Heart left ventricle (tissue), 16 donors: ENCODE measurements at regions of chr3 and their contacts with region 1.

Region 1: DNA sequence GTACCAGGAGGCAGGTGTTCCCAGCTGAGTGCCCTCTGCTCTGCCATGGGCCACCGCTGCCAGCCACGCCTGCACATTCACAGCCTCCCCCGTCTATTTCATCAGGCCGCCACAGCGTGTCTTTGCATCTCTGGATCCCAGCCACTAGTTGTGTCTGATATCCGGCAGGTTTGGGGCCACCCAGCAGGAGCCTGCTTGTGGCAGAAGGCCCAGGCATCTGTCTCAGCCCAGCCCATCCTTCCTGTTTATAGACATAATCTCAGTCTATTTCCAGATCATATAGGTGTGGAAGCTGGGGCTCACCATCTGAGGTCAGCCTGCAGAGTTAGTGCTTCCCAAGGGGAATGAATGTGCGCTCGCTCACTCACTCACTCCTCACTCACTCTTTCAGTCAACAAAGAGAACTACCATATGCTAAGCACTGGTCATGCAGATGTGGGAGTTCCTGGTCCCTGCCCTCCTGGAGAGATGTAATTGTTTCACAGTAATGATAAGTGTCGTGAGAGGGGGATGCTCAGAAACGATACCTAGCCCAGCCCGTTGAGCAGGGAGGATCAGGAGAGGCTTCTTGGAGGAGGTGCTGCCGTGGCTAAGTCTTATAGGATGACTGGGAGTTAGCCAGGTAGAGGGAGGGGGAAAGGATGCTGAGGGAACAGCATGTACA is 60.6 kb downstream of the FGD5 start:
- DNase-seq: peak in 3 of 5 donors; percentile 44 to 65 (median 45)
- ATAC-seq: peak; percentile 49 to 66 (median 60)
- H3K4me3 ChIP-seq: no peak overlapping the region
- H3K27ac ChIP-seq: peak overlapping the region in 7 of 12 donors; percentile 1 to 39 (median 9)
- H3K4me1 ChIP-seq: peaks cover 0 to 54% (median 35%) of the 10 kb centered on the region in 12 donors
- H3K27me3 ChIP-seq: no peaks in the 10 kb centered on the region
- CTCF ChIP-seq: no peak
- POLR2A ChIP-seq: no peak

Region 2: GRCh38 chr3:14803101-14803980 is 76.0 kb before region 1 on chr3:
- intact Hi-C with region 1: loop called in 1 of 10 experiments (anchors 5 kb)
- DNase-seq: peak in 1 of 5 donors; percentile 59
- ATAC-seq: peak; percentile 57 to 64 (median 58)
- H3K4me3 ChIP-seq: no peak overlapping the region
- H3K27ac ChIP-seq: peak overlapping the region; percentile 14 to 90 (median 74)
- H3K4me1 ChIP-seq: peaks cover 3 to 45% (median 32%) of the 10 kb centered on the region in 12 donors
- H3K27me3 ChIP-seq: peaks cover 0 to 9% (median 0%) of the 10 kb centered on the region in 9 donors
- CTCF ChIP-seq: peak in 1 of 12 donors; percentile 9
- POLR2A ChIP-seq: no peak

Region 3: GRCh38 chr3:14836049-14836468 is 43.3 kb before region 1 on chr3:
- intact Hi-C with region 1: no loop called
- DNase-seq: peak; percentile 68 to 87 (median 83)
- ATAC-seq: peak; percentile 55 to 86 (median 84)
- H3K4me3 ChIP-seq: no peak overlapping the region
- H3K27ac ChIP-seq: peak overlapping the region in 9 of 12 donors; percentile 11 to 64 (median 42)
- H3K4me1 ChIP-seq: peaks cover 9 to 80% (median 53%) of the 10 kb centered on the region in 12 donors
- H3K27me3 ChIP-seq: no peaks in the 10 kb centered on the region
- CTCF ChIP-seq: no peak
- POLR2A ChIP-seq: no peak